ENCODE measurements at regions of chr6 and their contacts with region 1.

Region 1: GRCh38 chr6:26285143-26286134 is 79.6 kb upstream of the BTN3A2 start:
- DNase-seq: peak; percentile 100
- H3K4me3 ChIP-seq: peak overlapping the region; percentile 54 to 89 (median 63)
- H3K27ac ChIP-seq: peak overlapping the region; percentile 100
- H3K4me1 ChIP-seq: no peaks in the 10 kb centered on the region
- H3K27me3 ChIP-seq: no peaks in the 10 kb centered on the region
- CTCF ChIP-seq: no peak

Region 2: GRCh38 chr6:26025894-26026832 is 259.3 kb before region 1 on chr6:
- CTCF ChIA-PET with region 1: no interaction called
- dilution Hi-C with region 1: no loop called
- in situ Hi-C with region 1: no loop called
- intact Hi-C with region 1: no loop called
- DNase-seq: peak; percentile 92
- H3K4me3 ChIP-seq: peak overlapping the region; percentile 41 to 60 (median 59)
- H3K27ac ChIP-seq: peak overlapping the region; percentile 89
- H3K4me1 ChIP-seq: peaks cover 30% of the 10 kb centered on the region
- H3K27me3 ChIP-seq: no peaks in the 10 kb centered on the region
- CTCF ChIP-seq: peak; percentile 91 to 95

Region 3: GRCh38 chr6:26103770-26104456 is 181.5 kb before region 1 on chr6:
- CTCF ChIA-PET with region 1: no interaction called
- dilution Hi-C with region 1: no loop called
- in situ Hi-C with region 1: no loop called
- intact Hi-C with region 1: no loop called
- DNase-seq: peak; percentile 95
- H3K4me3 ChIP-seq: peak overlapping the region; percentile 45 to 47 (median 47)
- H3K27ac ChIP-seq: peak overlapping the region; percentile 93
- H3K4me1 ChIP-seq: peaks cover 8% of the 10 kb centered on the region
- H3K27me3 ChIP-seq: no peaks in the 10 kb centered on the region
- CTCF ChIP-seq: peak; percentile 33 to 45

Region 4: GRCh38 chr6:26196846-26197648 is 88.4 kb before region 1 on chr6:
- CTCF ChIA-PET with region 1: no interaction called
- dilution Hi-C with region 1: loop called (anchors 5 kb)
- in situ Hi-C with region 1: no loop called
- intact Hi-C with region 1: no loop called
- DNase-seq: peak; percentile 89
- H3K4me3 ChIP-seq: peak overlapping the region; percentile 69 to 90 (median 87)
- H3K27ac ChIP-seq: peak overlapping the region; percentile 87
- H3K4me1 ChIP-seq: peaks cover 8% of the 10 kb centered on the region
- H3K27me3 ChIP-seq: no peaks in the 10 kb centered on the region
- CTCF ChIP-seq: no peak

Region 5: GRCh38 chr6:26216356-26216885 is 69.0 kb before region 1 on chr6:
- CTCF ChIA-PET with region 1: interaction called, 3 read pairs
- dilution Hi-C with region 1: no loop called
- in situ Hi-C with region 1: no loop called
- intact Hi-C with region 1: loop called (anchors 1 kb)
- DNase-seq: peak; percentile 98
- H3K4me3 ChIP-seq: peak overlapping the region; percentile 57 to 68 (median 65)
- H3K27ac ChIP-seq: peak overlapping the region; percentile 86
- H3K4me1 ChIP-seq: peaks cover 12% of the 10 kb centered on the region
- H3K27me3 ChIP-seq: no peaks in the 10 kb centered on the region
- CTCF ChIP-seq: no peak

Region 6: GRCh38 chr6:26249957-26250697 is 35.3 kb before region 1 on chr6:
- CTCF ChIA-PET with region 1: no interaction called
- dilution Hi-C with region 1: no loop called
- in situ Hi-C with region 1: no loop called
- intact Hi-C with region 1: loop called (anchors 1 kb)
- DNase-seq: peak; percentile 84
- H3K4me3 ChIP-seq: peak overlapping the region; percentile 62 to 71 (median 69)
- H3K27ac ChIP-seq: peak overlapping the region; percentile 53
- H3K4me1 ChIP-seq: peaks cover 8% of the 10 kb centered on the region
- H3K27me3 ChIP-seq: no peaks in the 10 kb centered on the region
- CTCF ChIP-seq: peak; percentile 37 to 68

Region 7: DNA sequence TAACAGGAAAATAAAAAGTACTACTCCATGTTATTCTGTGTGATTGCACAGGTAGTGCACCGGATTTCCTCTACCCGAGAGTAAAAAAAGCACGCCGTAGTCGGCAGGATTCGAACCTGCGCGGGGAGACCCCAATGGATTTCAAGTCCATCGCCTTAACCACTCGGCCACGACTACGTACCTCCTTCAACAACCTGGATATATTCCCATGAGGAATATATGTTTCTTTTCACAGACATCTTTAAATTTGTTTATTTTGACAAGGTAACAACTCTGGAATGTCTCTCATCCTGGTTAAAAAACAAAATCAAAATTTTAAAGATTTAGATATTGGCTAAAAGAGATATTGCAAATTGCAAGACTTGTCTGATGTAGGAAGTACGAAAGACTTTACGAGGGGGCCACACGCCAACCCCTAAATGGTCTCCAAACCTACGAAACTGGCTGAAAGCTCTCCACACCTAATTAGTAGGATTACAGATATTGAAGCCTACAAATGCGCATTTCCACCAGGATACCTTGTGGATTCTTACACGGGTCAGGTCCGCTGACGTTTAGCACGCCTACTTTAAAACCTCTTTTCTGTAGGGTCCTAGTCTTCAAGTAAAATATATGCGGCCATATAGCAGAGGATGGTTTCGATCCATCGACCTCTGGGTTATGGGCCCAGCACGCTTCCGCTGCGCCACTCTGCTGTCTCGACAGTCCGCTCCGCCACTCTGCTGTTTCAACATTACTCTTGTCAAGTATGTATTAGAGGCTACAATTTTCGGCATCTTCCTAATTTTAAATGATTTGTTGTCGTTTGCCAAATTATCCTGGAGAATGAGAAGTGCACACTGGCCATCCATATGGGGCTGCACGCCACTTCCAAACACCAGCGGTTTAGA is 27.3 kb after region 1 on chr6:
- CTCF ChIA-PET with region 1: no interaction called
- dilution Hi-C with region 1: no loop called
- in situ Hi-C with region 1: no loop called
- intact Hi-C with region 1: loop called (anchors 1 kb)
- DNase-seq: peak; percentile 81
- H3K4me3 ChIP-seq: peak overlapping the region; percentile 60 to 89 (median 70)
- H3K27ac ChIP-seq: peak overlapping the region; percentile 58
- H3K4me1 ChIP-seq: peaks cover 28% of the 10 kb centered on the region
- H3K27me3 ChIP-seq: no peaks in the 10 kb centered on the region
- CTCF ChIP-seq: no peak

Region 8: DNA sequence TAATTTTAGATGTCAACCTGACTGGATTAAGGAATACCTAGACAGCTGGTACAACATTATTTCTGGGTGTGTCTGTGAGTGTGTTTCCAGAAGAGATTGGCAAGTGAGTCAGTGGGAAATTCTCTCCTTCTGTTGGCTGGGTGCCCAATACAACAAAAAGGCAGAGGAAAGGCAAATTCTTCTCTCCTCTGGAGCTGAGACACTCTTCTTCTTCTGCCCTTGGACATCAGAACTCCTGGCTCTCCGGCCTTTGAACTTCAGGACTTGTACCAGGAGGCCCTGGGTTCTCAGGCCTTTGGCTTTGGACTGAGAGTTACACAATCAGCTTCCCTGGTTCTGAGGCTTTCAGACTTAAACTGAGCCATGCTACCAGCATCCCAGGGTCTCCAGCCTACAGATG is 108.8 kb after region 1 on chr6:
- CTCF ChIA-PET with region 1: no interaction called
- dilution Hi-C with region 1: no loop called
- in situ Hi-C with region 1: no loop called
- intact Hi-C with region 1: no loop called
- DNase-seq: peak; percentile 88
- H3K4me3 ChIP-seq: no peak overlapping the region
- H3K27ac ChIP-seq: no peak overlapping the region
- H3K4me1 ChIP-seq: peaks cover 5% of the 10 kb centered on the region
- H3K27me3 ChIP-seq: no peaks in the 10 kb centered on the region
- CTCF ChIP-seq: no peak

Region 9: GRCh38 chr6:27146706-27147505 is 861.5 kb after region 1 on chr6:
- CTCF ChIA-PET with region 1: no interaction called
- dilution Hi-C with region 1: no loop called
- in situ Hi-C with region 1: no loop called
- intact Hi-C with region 1: loop called (anchors 10 kb)
- DNase-seq: peak; percentile 99
- H3K4me3 ChIP-seq: peak overlapping the region; percentile 44 to 79 (median 73)
- H3K27ac ChIP-seq: peak overlapping the region; percentile 79
- H3K4me1 ChIP-seq: peaks cover 5% of the 10 kb centered on the region
- H3K27me3 ChIP-seq: no peaks in the 10 kb centered on the region
- CTCF ChIP-seq: no peak